ENCODE measurements at regions of chr3 and their contacts with region 1.

Region 1: DNA sequence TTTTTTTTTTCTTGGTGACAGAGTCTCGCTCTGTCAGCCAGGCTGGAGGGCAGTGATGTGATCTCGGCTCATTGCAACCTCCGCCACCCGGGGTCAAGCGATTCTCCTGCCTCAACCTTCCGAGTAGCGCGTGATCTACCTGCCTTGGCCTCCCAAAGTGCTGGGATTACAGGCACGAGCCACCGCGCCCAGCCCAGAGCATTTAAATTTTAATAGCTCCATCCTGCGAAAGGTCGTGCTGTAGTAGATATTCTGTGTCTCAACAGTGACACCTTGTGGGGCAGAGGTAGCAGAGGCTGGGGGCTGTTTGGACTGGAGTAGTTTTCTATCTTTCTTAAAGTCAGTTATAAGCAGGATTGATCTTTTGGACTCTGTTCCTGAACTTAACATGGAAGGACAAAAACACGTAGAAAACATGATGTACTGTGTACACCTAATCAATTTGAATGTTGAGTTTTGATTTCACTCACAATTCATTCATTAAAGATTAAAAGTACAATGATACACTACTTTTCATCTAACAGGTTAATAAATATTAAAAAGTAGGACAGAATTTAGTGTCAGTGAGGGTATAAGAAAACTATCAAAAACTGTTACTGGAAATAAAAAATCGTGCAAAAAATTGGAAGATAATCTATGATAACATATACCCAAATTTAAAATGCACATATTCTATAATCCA is 11.0 kb upstream of the PDCD6IP start:
- DNase-seq: peak; percentile 16 to 71 (median 58)
- ATAC-seq: peak; percentile 83
- H3K4me3 ChIP-seq: no peak overlapping the region
- H3K4me3 Mint-ChIP-seq: peak overlapping the region in 7 of 10 donors; percentile 46 to 73 (median 62)
- H3K27ac ChIP-seq: no peak overlapping the region
- H3K27ac Mint-ChIP-seq: no peak overlapping the region
- H3K4me1 ChIP-seq: no peaks in the 10 kb centered on the region
- H3K4me1 Mint-ChIP-seq: peaks cover 0 to 9% (median 0%) of the 10 kb centered on the region in 7 donors
- H3K27me3 ChIP-seq: no peaks in the 10 kb centered on the region
- H3K27me3 Mint-ChIP-seq: peaks cover 5 to 24% (median 10%) of the 10 kb centered on the region in 5 donors

Region 2: DNA sequence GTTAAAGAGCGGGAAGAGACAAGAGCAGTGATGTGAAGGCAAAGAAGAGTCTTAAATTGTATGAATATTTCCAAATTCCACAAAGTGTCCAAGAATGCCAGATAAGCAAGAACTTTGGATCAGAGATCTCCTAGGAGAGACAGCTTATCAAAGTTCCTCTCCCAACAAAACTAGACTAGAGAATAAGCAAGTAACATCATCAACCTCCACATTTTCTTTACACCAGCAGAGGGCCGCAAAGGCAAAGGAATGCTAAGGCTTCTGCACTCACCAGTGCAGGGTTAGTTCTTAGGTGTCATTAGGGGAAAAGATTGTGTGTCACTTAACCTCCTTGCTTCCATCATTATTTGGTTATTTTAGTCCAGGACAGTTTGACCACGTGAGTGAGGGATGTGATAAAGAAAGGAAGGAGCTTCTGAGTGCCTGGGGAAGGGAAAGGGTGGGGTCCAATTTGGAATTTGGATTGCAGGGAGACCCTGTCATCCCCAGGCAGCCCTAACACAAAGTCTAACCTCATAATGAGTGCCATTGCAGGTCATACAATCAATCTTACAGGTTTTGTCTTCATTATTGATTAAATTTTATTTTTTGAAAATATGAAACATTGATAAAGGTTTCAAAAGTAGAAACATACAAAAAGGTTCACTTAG is 1277.3 kb before region 1 on chr3:
- CTCF ChIA-PET with region 1: no interaction called
- POLR2A ChIA-PET with region 1: no interaction called
- intact Hi-C with region 1: loop called in 1 of 2 experiments (anchors 2 kb)
- DNase-seq: peak; percentile 30 to 75 (median 63)
- ATAC-seq: peak; percentile 97
- H3K4me3 ChIP-seq: no peak overlapping the region
- H3K4me3 Mint-ChIP-seq: no peak overlapping the region
- H3K27ac ChIP-seq: no peak overlapping the region
- H3K27ac Mint-ChIP-seq: no peak overlapping the region
- H3K4me1 ChIP-seq: no peaks in the 10 kb centered on the region
- H3K4me1 Mint-ChIP-seq: peaks cover 0 to 5% (median 2%) of the 10 kb centered on the region in 7 donors
- H3K27me3 ChIP-seq: no peaks in the 10 kb centered on the region
- H3K27me3 Mint-ChIP-seq: peaks cover 0 to under 1% (median 0%) of the 10 kb centered on the region in 5 donors

Region 3: GRCh38 chr3:33372218-33373081 is 415.0 kb before region 1 on chr3:
- CTCF ChIA-PET with region 1: interaction called, 3 read pairs
- POLR2A ChIA-PET with region 1: no interaction called
- intact Hi-C with region 1: loop called (anchors 2 kb)
- DNase-seq: peak in 8 of 9 donors; percentile 14 to 57 (median 38)
- ATAC-seq: peak; percentile 80
- H3K4me3 ChIP-seq: no peak overlapping the region
- H3K4me3 Mint-ChIP-seq: no peak overlapping the region
- H3K27ac ChIP-seq: no peak overlapping the region
- H3K27ac Mint-ChIP-seq: no peak overlapping the region
- H3K4me1 ChIP-seq: peaks cover 0 to 4% of the 10 kb centered on the region in 2 donors
- H3K4me1 Mint-ChIP-seq: peaks cover 2 to 8% (median 6%) of the 10 kb centered on the region in 7 donors
- H3K27me3 ChIP-seq: peaks cover 0 to 6% of the 10 kb centered on the region in 2 donors
- H3K27me3 Mint-ChIP-seq: peaks cover 12 to 32% (median 22%) of the 10 kb centered on the region in 5 donors

Region 4: DNA sequence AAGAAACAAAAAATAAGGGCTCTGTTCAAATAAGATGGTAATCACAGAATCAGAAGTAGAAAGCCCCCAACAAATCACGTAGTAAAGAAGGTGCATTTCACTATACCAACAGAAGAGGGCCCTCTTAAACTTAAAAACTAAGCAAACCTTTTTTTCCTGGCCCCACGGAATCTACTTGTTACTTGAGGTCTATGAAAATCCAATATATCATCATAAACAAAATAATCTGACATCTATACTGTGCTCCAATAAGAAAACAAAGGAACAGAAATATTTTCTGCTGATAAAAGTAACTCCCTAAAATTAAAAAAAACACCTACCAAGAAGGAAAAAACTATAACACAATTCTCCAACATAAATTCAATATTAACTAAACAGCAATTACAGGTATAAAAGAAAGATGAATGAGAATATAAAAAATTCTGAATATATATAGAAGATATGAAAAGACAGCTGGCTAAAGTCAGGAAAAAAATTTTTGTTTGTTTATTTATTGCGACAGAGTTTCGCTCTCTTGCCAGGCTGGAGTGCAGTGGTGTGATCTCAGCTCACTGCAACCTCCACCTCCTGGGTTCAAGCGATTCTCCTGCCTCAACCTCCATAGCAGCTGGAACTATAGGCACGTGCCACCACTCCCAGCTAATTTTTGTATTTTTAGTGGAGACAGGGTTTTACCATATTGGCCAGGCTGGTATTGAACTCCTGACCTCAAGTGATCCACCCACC is 151.2 kb before region 1 on chr3:
- CTCF ChIA-PET with region 1: interaction called, 19 read pairs
- POLR2A ChIA-PET with region 1: no interaction called
- intact Hi-C with region 1: loop called (anchors 1 kb)
- DNase-seq: peak in 7 of 9 donors; percentile 16 to 40 (median 30)
- ATAC-seq: peak; percentile 68
- H3K4me3 ChIP-seq: no peak overlapping the region
- H3K4me3 Mint-ChIP-seq: no peak overlapping the region
- H3K27ac ChIP-seq: no peak overlapping the region
- H3K27ac Mint-ChIP-seq: no peak overlapping the region
- H3K4me1 ChIP-seq: no peaks in the 10 kb centered on the region
- H3K4me1 Mint-ChIP-seq: peaks cover 0 to 7% (median 0%) of the 10 kb centered on the region in 7 donors
- H3K27me3 ChIP-seq: no peaks in the 10 kb centered on the region
- H3K27me3 Mint-ChIP-seq: no peaks in the 10 kb centered on the region

Region 5: DNA sequence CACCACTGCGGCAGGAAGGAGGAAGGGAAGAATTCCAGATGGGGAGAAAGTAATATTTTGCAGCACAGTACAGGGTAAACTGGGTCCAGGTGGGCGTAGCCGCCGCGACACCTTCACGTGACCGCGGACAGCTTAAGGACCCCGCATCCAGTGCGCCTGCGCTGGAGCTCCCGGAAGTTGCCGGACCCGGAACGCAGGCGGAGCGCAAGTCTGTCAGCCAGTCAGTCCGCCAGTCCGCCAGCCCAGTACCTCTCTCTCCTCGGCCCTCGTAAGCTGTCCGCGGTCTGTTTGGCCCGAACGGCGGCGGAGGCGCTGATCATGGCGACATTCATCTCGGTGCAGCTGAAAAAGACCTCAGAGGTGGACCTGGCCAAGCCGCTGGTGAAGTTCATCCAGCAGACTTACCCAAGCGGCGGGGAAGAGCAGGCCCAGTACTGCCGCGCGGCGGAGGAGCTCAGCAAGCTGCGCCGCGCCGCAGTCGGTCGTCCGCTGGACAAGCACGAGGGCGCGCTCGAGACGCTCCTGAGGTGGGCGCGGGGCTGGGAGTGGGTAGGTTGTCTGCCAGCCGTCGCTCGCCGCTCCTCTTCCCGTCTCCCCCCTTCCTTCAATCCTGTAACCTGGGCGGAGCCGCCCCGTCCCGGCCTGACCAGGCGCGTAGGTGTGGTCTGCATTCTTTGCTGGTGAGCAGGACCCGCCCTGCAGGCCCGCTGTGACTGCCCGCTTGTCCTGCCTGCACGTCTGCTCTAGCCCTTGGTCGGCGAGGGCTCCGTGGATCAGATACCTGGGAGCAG is 11.1 kb after region 1 on chr3 and contains the start of gene PDCD6IP:
- CTCF ChIA-PET with region 1: interaction called, 18 read pairs
- POLR2A ChIA-PET with region 1: interaction called, 4 read pairs
- intact Hi-C with region 1: loop called in 1 of 2 experiments (anchors 1 kb)
- DNase-seq: peak; percentile 80 to 90 (median 86)
- ATAC-seq: peak; percentile 88
- H3K4me3 ChIP-seq: peak within 1 kb of the TSS; percentile 97
- H3K4me3 Mint-ChIP-seq: peak within 1 kb of the TSS; percentile 87 to 100 (median 99)
- H3K27ac ChIP-seq: peak within 1 kb of the TSS; percentile 86
- H3K27ac Mint-ChIP-seq: peak within 1 kb of the TSS; percentile 92 to 100 (median 97)
- H3K4me1 ChIP-seq: peaks cover 21 to 24% of the 10 kb centered on the region in 2 donors
- H3K4me1 Mint-ChIP-seq: peaks cover 40 to 77% (median 67%) of the 10 kb centered on the region in 7 donors
- H3K27me3 ChIP-seq: no peaks in the 10 kb centered on the region
- H3K27me3 Mint-ChIP-seq: peaks cover 0 to 7% (median 0%) of the 10 kb centered on the region in 5 donors
- total RNA-seq, gene PDCD6IP: 139 to 221 (median 202) TPM

Region 6: DNA sequence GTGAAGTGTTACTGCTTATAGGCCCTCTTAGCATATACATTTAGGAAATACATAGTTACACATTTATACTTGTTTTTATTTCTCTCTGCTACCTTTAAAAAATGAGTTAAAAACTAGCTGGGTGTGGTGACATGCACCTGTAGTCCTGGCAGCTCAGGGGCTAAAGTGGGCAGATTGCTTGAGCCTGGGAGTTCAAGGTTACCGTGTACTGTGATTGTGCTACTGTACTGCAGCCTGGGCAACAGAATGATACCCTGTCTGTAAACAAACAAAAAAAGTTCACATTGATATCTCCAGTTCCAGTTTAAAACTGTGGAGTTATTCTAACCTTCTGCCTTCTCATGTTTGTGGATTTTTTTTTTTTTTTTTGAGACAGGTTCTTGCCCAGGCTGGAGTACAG is 23.1 kb after region 1 on chr3:
- CTCF ChIA-PET with region 1: no interaction called
- POLR2A ChIA-PET with region 1: no interaction called
- intact Hi-C with region 1: no loop called
- DNase-seq: no peak
- ATAC-seq: no peak
- H3K4me3 ChIP-seq: no peak overlapping the region
- H3K4me3 Mint-ChIP-seq: no peak overlapping the region
- H3K27ac ChIP-seq: no peak overlapping the region
- H3K27ac Mint-ChIP-seq: peak overlapping the region in 4 of 9 donors; percentile 6 to 84 (median 38)
- H3K4me1 ChIP-seq: peaks cover 16 to 26% of the 10 kb centered on the region in 2 donors
- H3K4me1 Mint-ChIP-seq: peaks cover 37 to 76% (median 65%) of the 10 kb centered on the region in 7 donors
- H3K27me3 ChIP-seq: no peaks in the 10 kb centered on the region
- H3K27me3 Mint-ChIP-seq: no peaks in the 10 kb centered on the region

Region 7: GRCh38 chr3:34387826-34388564 is 600.5 kb after region 1 on chr3:
- CTCF ChIA-PET with region 1: no interaction called
- POLR2A ChIA-PET with region 1: no interaction called
- intact Hi-C with region 1: no loop called
- DNase-seq: no peak
- ATAC-seq: no peak
- H3K4me3 ChIP-seq: no peak overlapping the region
- H3K4me3 Mint-ChIP-seq: no peak overlapping the region
- H3K27ac ChIP-seq: no peak overlapping the region
- H3K27ac Mint-ChIP-seq: no peak overlapping the region
- H3K4me1 ChIP-seq: no peaks in the 10 kb centered on the region
- H3K4me1 Mint-ChIP-seq: no peaks in the 10 kb centered on the region
- H3K27me3 ChIP-seq: no peaks in the 10 kb centered on the region
- H3K27me3 Mint-ChIP-seq: peaks cover 0 to 6% (median 0%) of the 10 kb centered on the region in 5 donors